ENCODE measurements at regions of chr12 and their contacts with region 1.

Region 1: GRCh38 chr12:92408072-92408900 is 262.6 kb upstream of the BTG1 start:
- DNase-seq: peak; percentile 37
- H3K4me3 Mint-ChIP-seq: no peak overlapping the region
- H3K27ac Mint-ChIP-seq: no peak overlapping the region
- H3K4me1 Mint-ChIP-seq: peaks cover 46% of the 10 kb centered on the region
- H3K27me3 Mint-ChIP-seq: no peaks in the 10 kb centered on the region

Region 2: DNA sequence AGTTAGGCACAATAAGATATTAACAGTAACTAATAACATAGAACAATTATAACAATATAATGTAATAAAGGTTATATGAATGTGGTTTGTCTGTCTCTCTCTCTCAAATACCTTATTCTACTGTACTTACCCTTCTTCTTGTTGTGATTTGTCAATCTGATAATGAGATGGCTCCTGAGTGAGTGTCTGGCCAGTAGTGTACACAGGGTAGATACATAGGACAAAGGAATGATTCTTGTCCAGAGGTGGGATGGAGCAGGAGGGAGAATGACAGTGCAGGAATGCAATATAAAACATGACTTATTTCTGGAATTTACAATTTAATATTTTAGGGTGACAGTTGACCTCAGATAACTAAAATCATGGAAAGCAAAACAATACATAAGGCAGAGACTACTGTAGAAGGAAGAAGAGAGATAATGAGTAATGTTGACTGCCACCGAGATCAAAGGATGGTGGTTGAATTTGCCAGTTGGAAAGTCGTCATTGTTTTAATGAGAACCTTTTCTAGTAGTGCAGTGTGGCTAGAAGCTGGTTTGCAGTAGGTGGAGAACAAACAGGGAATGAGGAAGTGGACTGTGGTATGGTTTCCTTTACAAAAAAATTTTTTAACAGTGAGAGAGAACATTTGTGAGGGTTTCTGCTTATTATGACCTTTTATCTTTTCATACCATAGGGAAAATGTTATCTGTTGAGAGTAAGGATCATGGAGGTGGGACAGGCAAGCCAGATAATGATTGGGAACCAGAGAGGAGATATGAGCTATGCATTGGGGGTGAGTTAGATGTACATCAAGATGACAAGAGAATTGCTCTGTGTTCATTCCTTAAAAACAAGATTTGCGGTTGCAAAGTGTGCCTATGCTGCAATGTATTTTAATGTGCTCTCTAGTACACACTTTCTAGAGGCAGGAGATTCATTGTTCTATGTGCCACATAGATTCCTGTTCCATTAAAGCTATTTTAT is 721.0 kb before region 1 on chr12:
- intact Hi-C with region 1: loop called (anchors 5 kb)
- DNase-seq: peak; percentile 2
- H3K4me3 Mint-ChIP-seq: peak overlapping the region; percentile 54
- H3K27ac Mint-ChIP-seq: peak overlapping the region; percentile 83
- H3K4me1 Mint-ChIP-seq: peaks cover 22% of the 10 kb centered on the region
- H3K27me3 Mint-ChIP-seq: no peaks in the 10 kb centered on the region

Region 3: DNA sequence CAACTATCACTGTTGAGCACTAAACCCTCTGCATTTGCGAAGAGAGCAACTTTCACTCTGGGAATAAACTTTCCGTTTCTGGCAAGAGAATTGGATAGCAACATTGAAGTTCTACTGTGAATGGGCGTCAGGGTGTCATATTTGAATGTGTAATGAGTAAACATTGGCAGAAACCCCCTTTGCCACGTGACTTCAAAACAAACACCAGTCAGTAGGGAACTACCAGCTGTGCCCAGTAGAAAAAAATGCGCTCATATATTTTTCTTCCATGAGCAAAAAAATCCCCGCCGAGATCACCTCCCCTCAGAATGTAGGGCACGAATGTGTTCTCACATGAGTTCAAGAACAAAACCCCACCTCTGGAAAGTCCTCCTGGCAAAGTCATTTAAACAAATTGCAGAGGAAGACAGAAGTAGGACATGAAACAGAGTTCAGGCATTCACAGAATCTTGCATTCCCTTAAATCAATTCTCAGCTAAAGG is 343.2 kb before region 1 on chr12:
- intact Hi-C with region 1: loop called (anchors 1 kb)
- DNase-seq: peak; percentile 31
- H3K4me3 Mint-ChIP-seq: peak overlapping the region; percentile 27
- H3K27ac Mint-ChIP-seq: peak overlapping the region; percentile 69
- H3K4me1 Mint-ChIP-seq: peaks cover 55% of the 10 kb centered on the region
- H3K27me3 Mint-ChIP-seq: no peaks in the 10 kb centered on the region

Region 4: DNA sequence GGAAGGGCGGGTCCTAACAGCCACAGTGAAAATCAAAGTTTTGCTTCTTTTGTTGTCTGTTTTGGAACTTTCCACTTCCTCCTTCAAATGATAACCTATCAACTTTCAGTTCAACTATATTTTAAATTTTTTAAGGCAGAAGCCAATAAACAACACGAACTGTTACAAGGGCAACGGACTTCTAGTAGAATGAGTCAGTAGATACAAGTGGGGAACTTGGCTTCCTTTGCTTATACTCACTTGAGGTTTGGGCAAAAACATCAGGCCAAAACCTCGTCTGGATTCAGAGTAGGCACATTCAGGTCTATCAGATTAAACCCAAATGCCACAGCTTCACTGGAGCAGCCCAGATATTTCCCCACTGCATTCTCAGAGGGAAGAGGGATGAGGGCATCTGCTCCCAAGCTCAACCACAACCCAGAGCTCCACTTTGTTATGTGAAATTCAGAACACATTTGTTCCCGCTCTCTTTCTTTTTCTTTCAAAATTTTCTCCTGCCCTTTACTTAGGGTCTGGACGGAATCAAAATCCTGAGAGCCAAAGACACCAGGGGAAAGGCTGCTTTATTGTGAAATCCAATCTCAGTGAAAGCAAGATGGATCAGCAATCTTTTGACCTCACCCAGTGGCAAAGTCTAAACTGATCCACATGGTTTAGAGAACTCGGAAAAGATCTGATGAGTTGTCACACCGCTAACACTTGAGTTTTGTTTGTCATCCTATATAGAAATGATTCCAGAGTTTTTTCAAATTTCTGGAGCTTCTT is 110.2 kb before region 1 on chr12:
- intact Hi-C with region 1: loop called (anchors 5 kb)
- DNase-seq: peak; percentile 7
- H3K4me3 Mint-ChIP-seq: peak overlapping the region; percentile 49
- H3K27ac Mint-ChIP-seq: peak overlapping the region; percentile 88
- H3K4me1 Mint-ChIP-seq: no peaks in the 10 kb centered on the region
- H3K27me3 Mint-ChIP-seq: no peaks in the 10 kb centered on the region

Region 5: DNA sequence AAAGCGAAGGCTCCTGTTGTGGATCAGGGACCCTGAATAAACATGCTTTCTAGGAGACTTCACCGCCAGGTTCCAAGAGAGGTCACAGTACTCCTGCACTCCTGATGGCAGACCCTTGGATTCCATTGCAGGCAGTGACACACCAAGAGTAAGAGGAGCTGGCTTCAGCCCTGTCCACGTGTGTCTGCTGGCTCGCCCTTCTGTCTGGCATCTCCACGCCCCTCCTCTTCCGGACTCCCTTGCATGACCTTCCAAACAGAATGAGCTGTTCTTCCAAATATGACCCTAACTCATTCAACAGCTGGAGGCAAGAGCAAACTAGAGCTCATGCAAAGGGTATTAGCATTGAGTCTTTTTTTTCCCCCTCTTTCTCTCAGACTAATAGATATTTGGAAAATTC is 61.6 kb after region 1 on chr12:
- intact Hi-C with region 1: loop called (anchors 1 kb)
- DNase-seq: no peak
- H3K4me3 Mint-ChIP-seq: no peak overlapping the region
- H3K27ac Mint-ChIP-seq: peak overlapping the region; percentile 81
- H3K4me1 Mint-ChIP-seq: peaks cover 30% of the 10 kb centered on the region
- H3K27me3 Mint-ChIP-seq: no peaks in the 10 kb centered on the region

Region 6: DNA sequence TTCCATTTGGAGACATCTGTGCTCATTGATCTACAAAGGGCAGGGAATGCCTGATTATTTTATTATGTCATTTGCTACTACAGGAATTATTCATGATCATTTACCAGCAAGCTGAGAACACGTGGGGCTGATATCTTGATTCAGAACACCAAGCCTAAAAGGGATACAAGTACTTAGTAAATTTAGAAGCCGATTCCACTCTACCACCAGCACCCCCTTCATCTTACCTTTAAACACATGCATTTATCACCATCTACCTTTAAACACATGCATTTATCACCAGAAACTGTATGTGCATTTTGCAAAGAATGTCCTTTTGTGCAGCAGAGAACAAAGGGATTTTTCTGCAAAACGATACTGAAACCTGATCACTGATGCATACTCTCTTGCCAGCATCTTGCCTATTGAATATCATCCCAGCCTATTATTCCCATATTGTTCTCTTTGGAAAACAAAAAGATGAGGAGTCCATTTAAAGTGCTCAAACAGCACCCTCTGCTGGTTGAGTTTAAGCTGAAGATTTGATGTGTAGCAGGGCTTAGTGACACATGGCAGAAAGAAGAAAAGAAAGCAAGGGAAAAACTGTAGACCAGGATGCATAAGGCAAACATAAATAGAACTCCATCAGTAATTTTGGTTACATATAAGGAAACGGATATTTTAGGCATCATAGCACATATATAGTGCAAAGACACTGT is 161.9 kb after region 1 on chr12:
- intact Hi-C with region 1: loop called (anchors 1 kb)
- DNase-seq: peak; percentile 36
- H3K4me3 Mint-ChIP-seq: no peak overlapping the region
- H3K27ac Mint-ChIP-seq: no peak overlapping the region
- H3K4me1 Mint-ChIP-seq: peaks cover 49% of the 10 kb centered on the region
- H3K27me3 Mint-ChIP-seq: no peaks in the 10 kb centered on the region